IMR-90 (cell line): ENCODE measurements at regions of chr2 and their contacts with region 1.

Region 1: DNA sequence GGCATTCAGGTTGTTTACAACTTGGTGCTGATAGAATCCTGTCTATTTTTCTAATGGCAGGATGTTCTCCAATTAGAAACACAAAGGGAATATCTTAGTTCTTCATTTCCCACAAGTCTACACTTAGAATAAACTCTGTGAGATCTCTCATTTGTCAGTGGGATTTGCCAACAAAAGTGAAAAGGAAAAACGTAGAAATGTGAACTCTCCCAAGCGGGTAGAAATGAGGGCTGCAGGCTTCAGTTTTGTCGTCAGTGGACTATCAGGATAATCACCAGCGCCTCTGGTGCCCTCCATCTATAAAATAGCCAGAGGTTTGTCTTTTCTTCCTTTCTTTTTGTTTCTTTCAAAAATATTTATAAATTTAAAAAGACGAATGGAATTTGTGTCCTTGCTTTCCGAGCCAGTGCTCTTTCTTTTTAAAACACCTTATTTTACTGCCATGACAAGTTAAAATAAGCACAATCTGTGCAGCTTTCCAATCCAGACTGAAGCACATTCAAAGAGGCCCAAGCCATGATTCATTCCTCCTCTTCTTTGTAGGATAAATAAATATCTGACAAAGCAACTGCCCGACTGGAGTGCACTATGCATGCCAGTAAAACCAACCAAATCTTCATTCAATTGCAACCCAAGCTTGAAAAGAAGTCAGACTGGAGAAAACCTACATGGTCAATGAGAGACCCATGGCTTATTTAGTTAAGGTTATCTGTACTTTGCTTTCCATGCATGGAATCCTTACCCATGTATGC is 185.8 kb downstream of the ANKRD44 start:
- DNase-seq: peak; percentile 92
- ATAC-seq: peak; percentile 94
- H3K4me3 ChIP-seq: no peak overlapping the region
- H3K27ac ChIP-seq: peak overlapping the region; percentile 71
- H3K4me1 ChIP-seq: peaks cover 13% of the 10 kb centered on the region
- H3K27me3 ChIP-seq: no peaks in the 10 kb centered on the region
- CTCF ChIP-seq: no peak
- POLR2A ChIP-seq: no peak
- RAD21 ChIP-seq: 0 out of 2 replicates have a peak, but pooled peaks have one; percentile 11

Region 2: GRCh38 chr2:197174539-197175094 is 49.8 kb after region 1 on chr2:
- CTCF ChIA-PET with region 1: no interaction called
- POLR2A ChIA-PET with region 1: no interaction called
- dilution Hi-C with region 1: no loop called
- in situ Hi-C with region 1: no loop called
- intact Hi-C with region 1: loop called (anchors 5 kb)
- DNase-seq: peak; percentile 69
- ATAC-seq: peak; percentile 44; the same call in 1 of the 2 replicates
- H3K4me3 ChIP-seq: no peak overlapping the region
- H3K27ac ChIP-seq: no peak overlapping the region
- H3K4me1 ChIP-seq: peaks cover 2% of the 10 kb centered on the region; the same call in 1 of the 2 replicates
- H3K27me3 ChIP-seq: no peaks in the 10 kb centered on the region
- CTCF ChIP-seq: no peak
- POLR2A ChIP-seq: no peak
- RAD21 ChIP-seq: no peak